ENCODE measurements at regions of chr12 and their contacts with region 1.

Region 1: GRCh38 chr12:29782285-29782870 is 1.4 kb downstream of the TMTC1 start:
- DNase-seq: no peak
- H3K4me3 ChIP-seq: peak overlapping the region; percentile 45 to 83 (median 66)
- H3K27ac ChIP-seq: peak overlapping the region; percentile 73 to 90 (median 86)
- H3K4me1 ChIP-seq: peaks cover 0 to 34% (median 2%) of the 10 kb centered on the region in 6 donors
- H3K27me3 ChIP-seq: peaks cover 0 to 64% (median 13%) of the 10 kb centered on the region in 7 donors
- CTCF ChIP-seq: no peak
- POLR2A ChIP-seq: no peak

Region 2: GRCh38 chr12:29519585-29520182 is 262.7 kb before region 1 on chr12:
- intact Hi-C with region 1: loop called (anchors 10 kb)
- DNase-seq: no peak
- H3K4me3 ChIP-seq: no peak overlapping the region
- H3K27ac ChIP-seq: no peak overlapping the region
- H3K4me1 ChIP-seq: peaks cover 0 to 9% (median 2%) of the 10 kb centered on the region in 6 donors
- H3K27me3 ChIP-seq: no peaks in the 10 kb centered on the region
- CTCF ChIP-seq: peak in 10 of 11 experiments; percentile 12 to 63 (median 44)
- POLR2A ChIP-seq: no peak